PC-3 (cell line): ENCODE measurements at regions of chr6 and their contacts with region 1.

Region 1: DNA sequence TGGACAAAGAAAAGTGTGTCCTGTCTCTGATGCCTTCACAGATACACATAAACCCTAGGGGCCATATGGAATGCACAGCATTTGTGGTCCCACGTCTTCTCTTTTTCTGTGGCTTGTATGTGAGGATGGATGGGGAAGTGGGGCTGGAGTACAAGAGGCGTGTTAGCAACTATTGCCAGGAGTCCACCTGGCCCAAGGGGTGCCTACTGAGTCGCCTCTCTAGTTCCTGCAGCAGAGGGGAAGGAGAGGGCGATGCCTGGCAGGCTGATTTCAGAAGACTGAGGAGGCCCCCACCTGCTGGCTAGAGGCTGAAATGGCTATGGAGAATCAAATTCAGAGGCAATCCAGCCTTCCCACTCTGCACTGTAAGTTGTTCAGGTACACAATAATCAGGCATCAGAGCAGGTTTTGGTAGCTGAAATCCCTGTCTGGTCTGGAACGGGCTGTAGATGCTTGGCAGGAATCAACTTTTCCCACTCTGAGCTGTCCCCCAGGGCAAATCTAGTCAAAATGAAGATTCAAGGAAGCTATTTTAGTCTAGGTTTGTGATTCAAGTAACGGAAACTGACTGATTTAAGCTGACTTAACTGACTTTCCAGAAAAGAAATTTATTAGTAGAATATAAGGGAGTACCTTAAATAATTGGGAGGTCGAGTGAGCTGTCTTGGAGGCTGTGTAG is 14.9 kb upstream of the PPARD start:
- DNase-seq: peak; percentile 71
- ATAC-seq: peak; percentile 85
- H3K4me3 ChIP-seq: no peak overlapping the region
- H3K27ac ChIP-seq: no peak overlapping the region
- H3K4me1 ChIP-seq: 0 out of 2 replicates have a peak, but pooled peaks cover 4% of the 10 kb centered on the region
- H3K27me3 ChIP-seq: no peaks in the 10 kb centered on the region
- CTCF ChIP-seq: peak; percentile 78

Region 2: GRCh38 chr6:34556031-34556892 is 771.2 kb before region 1 on chr6 and contains the start of gene SPDEF:
- CTCF ChIA-PET with region 1: no interaction called
- POLR2A ChIA-PET with region 1: no interaction called
- intact Hi-C with region 1: no loop called
- DNase-seq: peak; percentile 86
- ATAC-seq: peak; percentile 56
- H3K4me3 ChIP-seq: peak within 1 kb of the TSS; percentile 73
- H3K27ac ChIP-seq: peak within 1 kb of the TSS; percentile 65
- H3K4me1 ChIP-seq: peaks cover 43% of the 10 kb centered on the region
- H3K27me3 ChIP-seq: no peaks in the 10 kb centered on the region
- CTCF ChIP-seq: peak; percentile 43; the same call in 1 of the 2 replicates
- total RNA-seq, gene SPDEF: 190 and 205 TPM in 2 replicates

Region 3: DNA sequence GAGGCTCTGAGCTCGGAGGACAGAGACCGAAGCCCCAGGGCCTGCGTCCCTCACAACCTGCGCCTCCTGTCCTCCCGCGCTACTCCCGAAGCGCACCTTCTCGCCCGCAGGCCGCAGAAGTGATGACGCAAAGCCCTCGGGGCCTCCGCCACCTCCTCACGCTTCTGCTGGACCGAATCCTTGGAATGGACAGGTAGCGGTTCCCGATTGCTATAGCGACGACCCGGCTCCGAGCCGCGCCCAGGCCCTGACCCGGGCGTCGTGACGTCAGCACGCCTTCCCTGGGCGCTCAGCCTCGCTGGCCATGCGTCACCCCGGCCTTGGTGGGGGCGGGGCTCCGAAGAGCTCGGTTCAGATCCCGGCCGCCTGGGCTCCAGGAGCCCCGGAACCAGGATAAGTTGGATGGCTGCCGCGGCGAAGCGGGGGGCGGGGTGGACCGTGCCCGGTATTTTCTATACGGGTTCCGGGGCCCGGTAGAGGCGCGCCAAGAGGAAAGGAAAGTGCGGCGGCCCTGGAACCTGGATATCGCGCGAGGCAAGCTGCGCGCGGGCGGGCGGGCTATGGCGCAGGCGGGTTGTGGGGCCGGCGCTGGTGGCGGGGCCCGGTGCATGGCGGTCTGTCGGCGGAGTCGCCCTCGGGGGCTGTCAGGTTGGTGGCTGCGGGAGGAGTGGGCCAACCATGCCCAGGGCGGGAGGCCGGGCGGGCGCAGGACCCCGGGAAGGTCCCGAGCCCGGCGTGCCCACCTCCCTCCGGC is 68.1 kb before region 1 on chr6 and contains the start of gene ZNF76:
- CTCF ChIA-PET with region 1: interaction called, 11 read pairs
- POLR2A ChIA-PET with region 1: no interaction called
- intact Hi-C with region 1: no loop called
- DNase-seq: peak; percentile 99
- ATAC-seq: peak; percentile 95
- H3K4me3 ChIP-seq: peak within 1 kb of the TSS; percentile 89
- H3K27ac ChIP-seq: peak within 1 kb of the TSS; percentile 81
- H3K4me1 ChIP-seq: peaks cover 18% of the 10 kb centered on the region
- H3K27me3 ChIP-seq: no peaks in the 10 kb centered on the region
- CTCF ChIP-seq: no peak
- total RNA-seq, gene ZNF76: 17.9 and 20.8 TPM in 2 replicates